K562 (cell line): ENCODE measurements at regions of chr6 and their contacts with region 1.

Region 1: DNA sequence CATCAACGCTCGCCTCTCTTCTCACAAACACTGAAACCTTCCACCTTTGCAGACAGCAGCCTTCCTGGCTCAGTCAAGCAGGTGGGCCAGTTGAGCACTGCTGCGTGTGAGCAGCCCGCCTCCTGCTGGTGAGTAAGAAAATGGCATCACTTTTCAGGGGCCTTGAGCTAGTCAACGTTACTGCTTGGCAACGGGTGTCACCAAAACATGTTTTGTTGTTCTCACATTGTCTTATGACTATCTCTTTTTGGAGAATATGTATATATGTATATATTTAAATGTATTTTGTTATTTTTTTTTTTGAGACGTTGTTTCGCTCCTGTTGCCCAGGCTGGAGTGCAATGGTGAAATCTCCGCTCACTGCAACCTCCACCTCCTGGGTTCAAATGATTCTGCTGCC is 97.0 kb upstream of the AGPAT4 start:
- DNase-seq: peak; percentile 77 to 89 (median 84)
- ATAC-seq: peak; percentile 76
- H3K4me3 ChIP-seq: no peak overlapping the region
- H3K27ac ChIP-seq: no peak overlapping the region
- H3K4me1 ChIP-seq: peaks cover 11% of the 10 kb centered on the region in 2 experiments; a peak in 4 of 5 replicates
- H3K27me3 ChIP-seq: no peaks in the 10 kb centered on the region; a peak in 1 of 5 replicates
- CTCF ChIP-seq: peak; percentile 93 to 98 (median 98)
- EP300 ChIP-seq: no peak
- POLR2A ChIP-seq: no peak
- RAD21 ChIP-seq: peak; percentile 98 to 99

Region 2: GRCh38 chr6:160733050-160733646 is 637.7 kb before region 1 on chr6:
- CTCF ChIA-PET with region 1: interaction called, 16 read pairs
- POLR2A ChIA-PET with region 1: interaction called, 4 read pairs
- in situ Hi-C with region 1: loop called (anchors 5 kb)
- intact Hi-C with region 1: loop called (anchors 1 kb)
- DNase-seq: peak; percentile 43 to 79 (median 50)
- ATAC-seq: peak; percentile 94
- H3K4me3 ChIP-seq: no peak overlapping the region
- H3K27ac ChIP-seq: no peak overlapping the region
- H3K4me1 ChIP-seq: no peaks in the 10 kb centered on the region
- H3K27me3 ChIP-seq: no peaks in the 10 kb centered on the region
- CTCF ChIP-seq: peak; percentile 74 to 91 (median 86)
- EP300 ChIP-seq: no peak
- POLR2A ChIP-seq: no peak
- RAD21 ChIP-seq: peak; percentile 58 to 82

Region 3: GRCh38 chr6:160930547-160931377 is 440.1 kb before region 1 on chr6:
- CTCF ChIA-PET with region 1: no interaction called
- POLR2A ChIA-PET with region 1: no interaction called
- in situ Hi-C with region 1: loop called (anchors 5 kb)
- intact Hi-C with region 1: loop called (anchors 2 kb)
- DNase-seq: peak in 2 of 4 experiments; percentile 28
- ATAC-seq: no peak
- H3K4me3 ChIP-seq: no peak overlapping the region
- H3K27ac ChIP-seq: no peak overlapping the region
- H3K4me1 ChIP-seq: peaks cover 6 to 16% of the 10 kb centered on the region in 2 experiments; a peak in 4 of 5 replicates
- H3K27me3 ChIP-seq: no peaks in the 10 kb centered on the region; a peak in 1 of 5 replicates
- CTCF ChIP-seq: peak; percentile 34 to 40 (median 36); a peak in 3 of 6 replicates
- EP300 ChIP-seq: no peak
- POLR2A ChIP-seq: no peak
- RAD21 ChIP-seq: peak; percentile 27 to 78; a peak in 3 of 4 replicates

Region 4: DNA sequence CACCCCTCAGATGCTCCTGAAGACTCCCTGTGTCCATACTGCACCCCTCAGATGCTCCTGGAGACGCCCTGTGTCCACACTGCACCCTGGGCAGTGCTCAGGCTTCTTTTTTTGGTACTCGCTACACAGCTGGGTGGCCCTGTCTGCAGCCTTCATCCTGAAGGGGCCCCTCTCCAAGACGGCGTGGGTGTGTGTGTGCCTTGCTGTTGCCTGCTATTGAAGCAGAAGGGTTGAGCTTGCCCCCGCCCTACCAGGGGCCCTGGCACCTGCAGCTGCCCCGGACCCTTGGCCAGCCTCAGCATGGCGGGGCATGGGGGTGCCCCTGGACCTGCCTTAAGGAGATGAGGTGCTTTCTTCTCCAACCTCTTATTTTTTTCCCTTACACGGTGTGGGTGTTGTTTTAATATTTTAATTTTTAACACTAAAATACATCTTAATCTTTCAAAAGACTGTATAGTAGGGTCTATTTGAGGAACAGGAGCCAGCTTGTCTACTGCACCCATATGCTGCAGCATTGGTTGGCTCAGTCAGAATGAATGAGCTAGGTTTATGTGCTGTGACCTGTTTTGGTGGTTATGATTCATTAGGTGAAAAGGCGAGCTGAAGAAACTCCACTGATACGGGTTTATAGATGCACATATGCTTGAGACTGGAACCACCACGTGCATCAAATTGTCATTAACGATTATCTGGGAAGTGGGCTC is 232.9 kb before region 1 on chr6:
- CTCF ChIA-PET with region 1: interaction called, 7 read pairs
- POLR2A ChIA-PET with region 1: interaction called, 3 read pairs
- in situ Hi-C with region 1: no loop called
- intact Hi-C with region 1: loop called (anchors 1 kb)
- DNase-seq: no peak
- ATAC-seq: no peak
- H3K4me3 ChIP-seq: no peak overlapping the region
- H3K27ac ChIP-seq: no peak overlapping the region
- H3K4me1 ChIP-seq: peaks cover 4 to 31% of the 10 kb centered on the region in 2 experiments; a peak in 3 of 5 replicates
- H3K27me3 ChIP-seq: no peaks in the 10 kb centered on the region
- CTCF ChIP-seq: no peak
- EP300 ChIP-seq: no peak
- POLR2A ChIP-seq: no peak
- RAD21 ChIP-seq: no peak

Region 5: GRCh38 chr6:161204866-161205557 is 165.9 kb before region 1 on chr6:
- CTCF ChIA-PET with region 1: no interaction called
- POLR2A ChIA-PET with region 1: no interaction called
- in situ Hi-C with region 1: no loop called
- intact Hi-C with region 1: loop called (anchors 5 kb)
- DNase-seq: peak; percentile 79 to 96 (median 87)
- ATAC-seq: peak; percentile 92
- H3K4me3 ChIP-seq: peak overlapping the region; percentile 14
- H3K27ac ChIP-seq: peak overlapping the region; percentile 77
- H3K4me1 ChIP-seq: peaks cover 15 to 47% of the 10 kb centered on the region in 2 experiments; a peak in 4 of 5 replicates
- H3K27me3 ChIP-seq: no peaks in the 10 kb centered on the region
- CTCF ChIP-seq: peak in 2 of 3 experiments; percentile 11 to 28; a peak in 3 of 6 replicates
- EP300 ChIP-seq: peak; percentile 92
- POLR2A ChIP-seq: peak; percentile 72
- RAD21 ChIP-seq: peak; percentile 37 to 59

Region 6: DNA sequence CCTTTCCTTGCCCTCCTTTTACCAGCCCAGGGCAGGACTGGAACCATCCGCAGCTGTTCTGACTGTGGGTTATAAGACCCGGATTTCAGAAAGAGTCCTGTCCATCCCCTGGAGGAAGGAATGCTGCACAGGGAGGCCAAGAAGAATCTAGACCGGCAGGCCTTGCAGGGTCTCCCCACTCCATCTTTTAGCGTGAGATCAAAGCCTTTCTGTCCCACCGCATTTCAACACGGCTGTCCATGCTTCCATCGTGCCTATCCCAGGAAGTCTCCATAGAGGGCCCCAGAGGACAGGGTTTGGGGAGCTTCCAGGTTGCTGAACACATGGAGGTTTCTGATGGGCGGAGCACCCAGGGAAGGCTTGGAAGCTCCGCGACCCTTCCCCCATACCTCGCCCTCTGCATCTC is 17.7 kb before region 1 on chr6:
- CTCF ChIA-PET with region 1: interaction called, 14 read pairs
- POLR2A ChIA-PET with region 1: interaction called, 7 read pairs
- in situ Hi-C with region 1: no loop called
- intact Hi-C with region 1: loop called (anchors 1 kb)
- DNase-seq: peak; percentile 54 to 80 (median 66)
- ATAC-seq: peak; percentile 90
- H3K4me3 ChIP-seq: no peak overlapping the region
- H3K27ac ChIP-seq: no peak overlapping the region
- H3K4me1 ChIP-seq: peaks cover 2 to 14% of the 10 kb centered on the region in 2 experiments; a peak in 3 of 5 replicates
- H3K27me3 ChIP-seq: no peaks in the 10 kb centered on the region
- CTCF ChIP-seq: peak; percentile 76 to 85 (median 79)
- EP300 ChIP-seq: no peak
- POLR2A ChIP-seq: no peak
- RAD21 ChIP-seq: peak; percentile 27 to 82; a peak in 2 of 4 replicates